Naive thymus-derived CD8-positive, alpha-beta T cell (primary cell): ENCODE measurements at regions of chr5 and their contacts with region 1.

Region 1: DNA sequence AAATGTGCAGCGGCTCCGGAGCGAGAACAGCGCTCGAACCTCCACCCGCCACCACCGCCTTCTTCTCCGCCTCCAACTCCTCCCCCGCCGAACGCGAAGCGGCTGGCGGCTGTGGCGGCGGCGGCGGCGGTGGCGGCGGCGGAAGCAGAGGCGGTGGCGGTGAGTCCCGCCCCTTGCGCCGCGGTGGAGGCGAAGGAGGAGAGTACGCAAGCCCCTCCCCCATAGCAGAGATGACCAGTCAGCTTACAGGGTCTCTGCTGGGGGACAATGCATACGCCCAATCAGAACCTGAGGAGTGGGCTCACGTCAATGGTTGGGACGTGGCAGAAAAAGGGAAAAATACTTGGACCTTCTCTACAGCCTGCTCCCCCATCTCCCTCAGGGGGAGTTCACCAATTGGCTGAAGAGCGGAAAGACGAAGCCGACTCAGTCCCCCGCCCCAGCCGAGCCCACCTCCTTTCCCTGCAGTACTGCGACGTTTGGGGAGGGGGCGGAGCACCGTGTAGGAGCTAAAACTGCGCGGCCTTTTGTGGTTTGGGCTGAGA is at the start of gene PJA2:
- DNase-seq: peak; percentile 90 to 98 (median 96)
- ATAC-seq: peak; percentile 75 to 77
- H3K4me3 Mint-ChIP-seq: peak within 1 kb of the TSS; percentile 95 to 100 (median 99)
- H3K27ac Mint-ChIP-seq: peak within 1 kb of the TSS; percentile 97 to 100 (median 100)
- H3K4me1 Mint-ChIP-seq: peaks cover 18 to 43% (median 36%) of the 10 kb centered on the region in 4 donors
- H3K27me3 Mint-ChIP-seq: peaks cover 0 to 3% (median 0%) of the 10 kb centered on the region in 5 donors
- polyA plus RNA-seq, gene PJA2: 46.0 to 54.4 (median 47.7) TPM

Region 2: GRCh38 chr5:108381954-108382783 is 1027.7 kb before region 1 on chr5 and contains the start of gene FBXL17:
- POLR2A ChIA-PET with region 1: interaction called, 34 read pairs
- DNase-seq: peak; percentile 78 to 96 (median 92)
- ATAC-seq: peak; percentile 68 to 78
- H3K4me3 Mint-ChIP-seq: peak within 1 kb of the TSS; percentile 86 to 98 (median 92)
- H3K27ac Mint-ChIP-seq: peak within 1 kb of the TSS; percentile 93 to 98 (median 96)
- H3K4me1 Mint-ChIP-seq: peaks cover 22 to 47% (median 40%) of the 10 kb centered on the region in 4 donors
- H3K27me3 Mint-ChIP-seq: no peaks in the 10 kb centered on the region
- polyA plus RNA-seq, gene FBXL17: 4.6 to 5.0 (median 4.9) TPM